ENCODE measurements at regions of chr15 and their contacts with region 1.

Region 1: GRCh38 chr15:40115670-40116093 is 7.0 kb upstream of the BMF start:
- DNase-seq: peak; percentile 89
- ATAC-seq: peak; percentile 93
- H3K4me3 ChIP-seq: no peak overlapping the region
- H3K27ac ChIP-seq: no peak overlapping the region
- H3K4me1 ChIP-seq: no peaks in the 10 kb centered on the region
- H3K27me3 ChIP-seq: no peaks in the 10 kb centered on the region
- CTCF ChIP-seq: no peak

Region 2: GRCh38 chr15:40010686-40011085 is 105.0 kb before region 1 on chr15:
- intact Hi-C with region 1: no loop called
- DNase-seq: no peak
- ATAC-seq: no peak
- H3K4me3 ChIP-seq: no peak overlapping the region
- H3K27ac ChIP-seq: no peak overlapping the region
- H3K4me1 ChIP-seq: no peaks in the 10 kb centered on the region
- H3K27me3 ChIP-seq: no peaks in the 10 kb centered on the region
- CTCF ChIP-seq: no peak

Region 3: DNA sequence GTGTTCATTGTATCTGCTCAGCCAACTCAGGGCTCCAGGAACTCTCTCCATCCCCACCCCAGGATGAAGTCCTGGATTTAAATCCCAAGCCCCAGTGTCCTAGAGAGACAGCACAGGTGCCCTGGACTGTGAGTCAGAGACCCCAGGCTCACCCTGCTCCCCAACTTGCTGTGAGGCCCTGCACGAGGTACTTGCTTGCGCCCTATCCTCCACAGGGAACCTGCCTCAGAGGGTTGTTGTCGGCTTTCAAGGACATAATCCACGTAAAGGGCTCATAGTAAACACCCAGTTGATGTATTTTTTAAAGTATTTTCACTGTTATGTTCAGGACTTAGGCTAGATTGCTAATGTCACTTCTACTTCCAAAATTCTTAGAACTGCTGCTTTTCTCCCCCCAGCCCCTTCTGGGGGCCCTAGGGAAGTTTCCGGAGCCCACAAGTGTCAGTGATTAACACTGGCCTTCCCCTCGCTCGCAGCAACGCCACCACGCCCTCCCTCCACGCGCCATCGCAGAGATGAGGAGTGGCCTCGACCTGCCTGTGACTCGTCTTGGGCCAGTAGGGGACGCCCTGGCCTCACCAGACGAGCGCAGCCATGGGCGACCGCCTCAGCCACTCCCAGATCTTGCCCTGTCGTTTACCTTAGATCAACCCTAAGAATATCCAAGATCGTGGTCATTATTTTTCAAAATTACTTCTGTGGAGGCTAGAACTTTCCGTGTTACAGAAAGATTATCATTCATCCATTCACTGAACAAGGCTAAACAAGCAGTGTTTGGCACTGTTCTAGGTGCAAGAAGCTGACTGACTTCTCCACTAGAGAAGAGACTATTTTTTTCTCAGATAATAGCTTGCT is 70.7 kb before region 1 on chr15:
- intact Hi-C with region 1: loop called (anchors 10 kb)
- DNase-seq: peak; percentile 93
- ATAC-seq: peak; percentile 95
- H3K4me3 ChIP-seq: no peak overlapping the region
- H3K27ac ChIP-seq: no peak overlapping the region
- H3K4me1 ChIP-seq: peaks cover 48% of the 10 kb centered on the region
- H3K27me3 ChIP-seq: no peaks in the 10 kb centered on the region
- CTCF ChIP-seq: peak; percentile 94

Region 4: DNA sequence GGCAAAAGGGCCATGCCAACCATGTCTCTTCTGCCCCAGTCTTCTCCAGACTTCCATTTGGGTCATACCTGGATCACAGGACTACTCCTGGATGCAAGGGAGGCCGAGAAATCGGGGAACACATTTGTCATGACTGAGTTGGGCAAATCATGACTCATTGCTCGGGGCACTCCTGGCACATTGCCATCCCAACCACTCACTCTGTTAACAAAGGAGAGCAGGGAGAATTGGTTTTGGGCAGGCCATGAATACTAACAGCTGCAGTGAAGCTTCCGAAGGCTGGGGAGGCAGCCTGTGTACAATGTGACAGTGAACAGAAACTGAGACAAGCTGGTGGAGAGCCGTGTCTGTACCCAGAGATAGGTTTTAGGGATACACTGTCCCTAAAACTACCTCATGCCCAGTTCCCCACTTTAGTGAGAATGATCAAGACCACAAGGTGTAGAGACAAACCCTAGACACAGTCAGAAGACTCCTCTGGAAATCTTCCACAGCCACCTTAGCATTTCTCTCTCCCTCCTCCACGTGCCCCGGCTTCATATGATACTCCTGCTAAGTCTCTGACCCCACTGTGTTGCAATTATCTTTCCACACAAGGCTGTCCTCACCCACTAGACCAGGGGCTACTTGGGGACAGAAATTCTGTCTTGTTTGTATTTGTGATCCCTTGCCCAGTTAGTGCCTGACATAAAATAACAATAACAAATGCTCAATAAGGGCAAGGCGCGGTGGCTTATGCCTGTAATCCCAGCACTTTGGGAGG is 34.7 kb after region 1 on chr15:
- intact Hi-C with region 1: no loop called
- DNase-seq: no peak
- ATAC-seq: peak; percentile 7
- H3K4me3 ChIP-seq: no peak overlapping the region
- H3K27ac ChIP-seq: no peak overlapping the region
- H3K4me1 ChIP-seq: peaks cover 2% of the 10 kb centered on the region
- H3K27me3 ChIP-seq: no peaks in the 10 kb centered on the region
- CTCF ChIP-seq: no peak

Region 5: DNA sequence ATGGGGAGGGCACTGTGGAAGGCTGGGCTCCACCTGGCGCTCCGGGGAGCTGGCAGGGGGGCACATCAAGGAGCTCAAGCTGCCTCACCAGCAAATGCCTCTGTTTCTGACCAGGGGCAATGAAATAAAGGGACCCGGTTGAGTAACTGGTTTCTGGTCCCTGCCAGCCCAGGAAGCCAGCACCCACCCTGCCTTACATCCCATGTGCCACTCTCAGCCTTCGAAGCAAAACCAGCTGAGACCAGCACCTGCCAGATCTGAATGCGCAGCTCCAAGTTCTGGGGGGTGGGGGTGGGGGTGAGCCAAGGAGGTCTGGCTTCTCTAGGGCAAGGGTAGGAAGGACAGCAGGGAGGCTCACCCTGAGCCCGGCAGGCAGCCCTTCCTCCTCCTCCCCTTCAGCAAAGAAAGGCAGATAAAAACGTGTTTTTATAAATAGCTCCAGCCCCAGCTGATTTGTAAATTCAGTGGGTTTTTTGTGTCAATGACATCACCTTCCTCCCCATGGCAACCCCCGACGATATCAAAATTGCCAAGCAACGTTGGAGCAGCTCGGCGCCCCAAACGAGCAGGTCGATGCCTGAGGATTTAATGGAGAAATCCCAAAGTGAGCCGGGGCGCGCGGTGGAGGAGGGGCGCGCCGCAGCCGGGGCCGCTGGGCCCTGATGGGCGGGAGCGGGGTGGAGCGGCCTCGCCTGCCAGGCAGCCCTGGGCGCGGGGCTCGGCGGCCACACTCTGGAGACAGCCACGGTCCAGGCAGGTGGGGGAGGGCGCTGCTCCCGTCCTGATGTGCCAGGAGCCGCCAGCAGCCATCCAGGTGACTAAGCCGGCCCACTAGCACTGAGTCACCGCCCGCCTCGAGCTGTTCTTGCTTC is 123.1 kb after region 1 on chr15 and contains the start of gene PAK6:
- intact Hi-C with region 1: no loop called
- DNase-seq: peak; percentile 84
- ATAC-seq: peak; percentile 83
- H3K4me3 ChIP-seq: peak within 1 kb of the TSS; percentile 17
- H3K27ac ChIP-seq: no peak within 1 kb of the TSS
- H3K4me1 ChIP-seq: no peaks in the 10 kb centered on the region
- H3K27me3 ChIP-seq: peaks cover 11% of the 10 kb centered on the region
- CTCF ChIP-seq: no peak
- total RNA-seq, gene PAK6: 5.7 TPM